ENCODE measurements at regions of chr5 and their contacts with region 1.

Region 1: DNA sequence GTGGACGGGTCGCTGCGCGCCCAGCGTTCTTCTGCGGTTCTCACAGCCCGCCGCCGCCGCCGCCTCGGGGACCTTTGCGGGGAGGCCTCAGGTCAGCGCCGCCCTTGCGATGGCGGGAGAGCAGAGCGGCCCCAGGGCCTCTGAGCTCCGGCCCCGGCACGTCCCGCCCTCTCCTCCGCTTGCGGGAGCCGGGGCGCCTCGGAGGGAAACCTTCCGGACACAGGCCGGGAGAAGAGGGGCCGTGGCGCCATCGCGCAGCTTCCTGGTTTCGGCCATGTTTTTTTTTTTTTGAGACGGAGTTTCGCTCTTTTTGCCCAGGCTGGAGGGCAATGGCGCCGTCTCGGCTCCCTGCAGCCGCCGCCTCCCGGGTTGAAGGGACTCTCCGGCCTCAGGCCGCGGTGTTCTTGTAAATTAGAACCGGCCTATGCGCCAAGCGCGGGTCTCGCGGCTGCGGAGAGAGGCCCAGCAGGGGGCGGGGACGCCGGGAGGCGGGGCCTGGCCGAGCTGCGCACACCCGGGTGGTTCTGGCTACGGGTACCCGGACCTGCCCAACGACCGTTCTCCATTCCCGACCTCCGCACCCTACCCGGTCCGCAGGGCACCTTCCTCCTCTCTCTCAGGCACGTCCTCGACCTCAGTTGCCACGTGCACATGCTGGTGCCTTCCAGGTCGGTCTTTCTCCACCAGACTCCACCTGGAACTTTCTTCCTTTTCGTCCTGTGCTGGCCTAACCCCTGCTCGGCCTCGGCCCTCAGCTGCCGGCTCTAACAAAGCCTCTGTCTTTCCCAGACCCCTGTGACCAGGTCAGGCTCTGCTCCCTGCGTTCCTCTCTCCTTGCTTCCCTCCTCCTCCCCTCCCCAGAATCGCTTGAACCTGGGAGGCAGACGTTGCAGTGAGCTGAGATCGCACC is 28.8 kb upstream of the MGAT1 start:
- DNase-seq: peak; percentile 60 to 85 (median 70)
- ATAC-seq: peak; percentile 76
- H3K4me3 ChIP-seq: peak overlapping the region; percentile 62
- H3K4me3 Mint-ChIP-seq: peak overlapping the region; percentile 97 to 100 (median 98)
- H3K27ac ChIP-seq: peak overlapping the region; percentile 95
- H3K27ac Mint-ChIP-seq: peak overlapping the region; percentile 96 to 100 (median 98)
- H3K4me1 ChIP-seq: peaks cover 29 to 32% of the 10 kb centered on the region in 2 donors
- H3K4me1 Mint-ChIP-seq: peaks cover 35 to 67% (median 58%) of the 10 kb centered on the region in 7 donors
- H3K27me3 ChIP-seq: no peaks in the 10 kb centered on the region
- H3K27me3 Mint-ChIP-seq: no peaks in the 10 kb centered on the region

Region 2: DNA sequence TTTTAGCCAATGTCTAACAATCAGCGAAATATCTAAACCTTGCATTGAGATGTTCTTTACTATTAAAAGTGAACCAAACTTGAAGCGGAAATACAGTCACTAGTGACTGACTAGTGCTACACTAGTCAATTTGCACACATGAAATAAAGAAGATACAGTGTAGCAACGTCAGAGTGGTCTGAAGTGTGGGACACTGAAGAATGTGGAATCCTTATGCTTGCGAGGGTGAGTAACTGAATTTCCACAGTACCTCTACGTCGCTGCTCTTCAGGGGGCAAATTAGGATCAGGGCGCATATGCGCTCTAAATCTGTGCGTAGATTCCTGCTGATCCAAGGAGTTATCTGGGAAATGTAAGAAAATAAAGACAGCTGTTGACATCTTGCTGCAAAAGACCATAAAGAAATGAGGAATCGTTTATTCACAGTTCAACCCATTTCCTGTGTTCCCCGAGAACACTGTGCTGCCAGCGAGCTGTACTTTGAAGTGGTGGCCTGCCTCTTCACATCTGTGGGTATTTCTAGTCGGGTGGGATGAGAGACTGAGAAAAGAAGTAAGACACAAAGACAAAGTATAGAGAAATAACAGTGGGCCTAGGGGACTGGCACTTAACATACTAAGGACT is 142.2 kb before region 1 on chr5:
- CTCF ChIA-PET with region 1: no interaction called
- POLR2A ChIA-PET with region 1: interaction called, 6 read pairs
- intact Hi-C with region 1: loop called in 1 of 2 experiments (anchors 10 kb)
- DNase-seq: peak in 8 of 9 donors; percentile 27 to 80 (median 74)
- ATAC-seq: peak; percentile 88
- H3K4me3 ChIP-seq: peak overlapping the region; percentile 35
- H3K4me3 Mint-ChIP-seq: peak overlapping the region; percentile 52 to 87 (median 79)
- H3K27ac ChIP-seq: peak overlapping the region; percentile 75
- H3K27ac Mint-ChIP-seq: peak overlapping the region; percentile 51 to 98 (median 97)
- H3K4me1 ChIP-seq: peaks cover 29 to 75% of the 10 kb centered on the region in 2 donors
- H3K4me1 Mint-ChIP-seq: peaks cover 22 to 85% (median 80%) of the 10 kb centered on the region in 7 donors
- H3K27me3 ChIP-seq: no peaks in the 10 kb centered on the region
- H3K27me3 Mint-ChIP-seq: peaks cover 0 to 10% (median 0%) of the 10 kb centered on the region in 5 donors

Region 3: DNA sequence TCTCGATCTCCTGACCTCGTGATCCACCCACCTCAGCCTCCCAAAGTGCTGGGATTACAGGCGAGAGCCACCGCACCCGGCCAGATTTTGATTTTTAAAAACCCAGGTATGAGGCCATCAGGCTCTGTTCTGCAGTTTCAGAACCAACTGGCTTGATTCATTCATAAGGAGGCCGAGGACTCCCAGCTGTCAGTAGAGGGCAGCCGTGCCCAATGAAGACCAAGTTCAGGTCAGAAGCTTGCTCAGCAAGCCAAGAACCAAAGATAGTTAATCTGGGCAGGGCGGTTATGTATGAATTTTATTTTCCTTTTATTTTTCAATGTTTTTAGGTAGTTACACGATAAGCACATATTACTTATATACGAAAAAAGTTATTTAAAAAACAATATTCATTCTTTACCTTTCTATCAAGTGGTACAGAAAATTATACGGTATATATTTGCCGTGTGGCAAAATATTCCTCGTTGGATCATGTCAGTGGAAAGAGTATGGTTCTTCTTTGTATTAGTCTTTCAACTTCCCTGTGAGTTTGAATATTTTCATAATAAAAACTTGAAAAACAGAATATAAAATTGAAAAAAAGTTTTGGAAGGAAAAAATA is 46.8 kb before region 1 on chr5:
- CTCF ChIA-PET with region 1: interaction called, 3 read pairs
- POLR2A ChIA-PET with region 1: interaction called, 8 read pairs
- intact Hi-C with region 1: loop called in 1 of 2 experiments (anchors 1 kb)
- DNase-seq: peak; percentile 45 to 78 (median 65)
- ATAC-seq: peak; percentile 87
- H3K4me3 ChIP-seq: no peak overlapping the region
- H3K4me3 Mint-ChIP-seq: no peak overlapping the region
- H3K27ac ChIP-seq: no peak overlapping the region
- H3K27ac Mint-ChIP-seq: peak overlapping the region in 6 of 9 donors; percentile 8 to 76 (median 33)
- H3K4me1 ChIP-seq: peaks cover 0 to 7% of the 10 kb centered on the region in 2 donors
- H3K4me1 Mint-ChIP-seq: peaks cover 23 to 58% (median 46%) of the 10 kb centered on the region in 7 donors
- H3K27me3 ChIP-seq: no peaks in the 10 kb centered on the region
- H3K27me3 Mint-ChIP-seq: no peaks in the 10 kb centered on the region

Region 4: GRCh38 chr5:180795771-180796313 is 35.6 kb before region 1 on chr5:
- CTCF ChIA-PET with region 1: interaction called, 3 read pairs
- POLR2A ChIA-PET with region 1: interaction called, 273 read pairs
- intact Hi-C with region 1: no loop called
- DNase-seq: no peak
- ATAC-seq: no peak
- H3K4me3 ChIP-seq: no peak overlapping the region
- H3K4me3 Mint-ChIP-seq: peak overlapping the region; percentile 12 to 91 (median 56)
- H3K27ac ChIP-seq: peak overlapping the region; percentile 24
- H3K27ac Mint-ChIP-seq: peak overlapping the region; percentile 38 to 91 (median 82)
- H3K4me1 ChIP-seq: peaks cover 59 to 61% of the 10 kb centered on the region in 2 donors
- H3K4me1 Mint-ChIP-seq: peaks cover 66 to 87% (median 81%) of the 10 kb centered on the region in 7 donors
- H3K27me3 ChIP-seq: no peaks in the 10 kb centered on the region
- H3K27me3 Mint-ChIP-seq: no peaks in the 10 kb centered on the region

Region 5: GRCh38 chr5:180816608-180817534 is 14.5 kb before region 1 on chr5:
- CTCF ChIA-PET with region 1: interaction called, 9 read pairs
- POLR2A ChIA-PET with region 1: interaction called, 167 read pairs
- intact Hi-C with region 1: no loop called
- DNase-seq: peak in 2 of 9 donors; percentile 31 to 40
- ATAC-seq: no peak
- H3K4me3 ChIP-seq: peak overlapping the region; percentile 37
- H3K4me3 Mint-ChIP-seq: peak overlapping the region; percentile 39 to 90 (median 76)
- H3K27ac ChIP-seq: peak overlapping the region; percentile 20
- H3K27ac Mint-ChIP-seq: peak overlapping the region in 8 of 9 donors; percentile 60 to 94 (median 89)
- H3K4me1 ChIP-seq: peaks cover 9 to 18% of the 10 kb centered on the region in 2 donors
- H3K4me1 Mint-ChIP-seq: peaks cover 27 to 63% (median 55%) of the 10 kb centered on the region in 7 donors
- H3K27me3 ChIP-seq: no peaks in the 10 kb centered on the region
- H3K27me3 Mint-ChIP-seq: peaks cover 0 to 15% (median 0%) of the 10 kb centered on the region in 5 donors

Region 6: DNA sequence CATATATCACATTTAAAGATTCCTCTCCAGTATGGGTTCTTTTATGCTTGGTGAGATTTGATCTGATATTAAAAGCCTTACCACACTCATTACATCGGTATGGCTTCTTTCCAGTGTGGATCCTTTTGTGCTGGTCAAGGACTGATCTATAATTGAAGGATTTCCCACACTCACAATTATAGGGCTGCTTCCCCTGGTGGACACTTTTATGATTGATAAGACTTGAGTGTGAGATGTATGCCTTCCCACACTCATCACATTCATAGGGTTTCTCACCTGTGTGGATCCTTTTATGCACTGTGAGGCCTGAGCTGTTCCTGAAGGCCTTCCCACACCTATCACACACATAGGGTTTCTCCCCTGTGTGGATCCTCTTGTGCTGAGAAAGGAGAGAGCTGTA is 17.5 kb after region 1 on chr5:
- CTCF ChIA-PET with region 1: no interaction called
- POLR2A ChIA-PET with region 1: interaction called, 12 read pairs
- intact Hi-C with region 1: no loop called
- DNase-seq: no peak
- ATAC-seq: no peak
- H3K4me3 ChIP-seq: no peak overlapping the region
- H3K4me3 Mint-ChIP-seq: no peak overlapping the region
- H3K27ac ChIP-seq: no peak overlapping the region
- H3K27ac Mint-ChIP-seq: no peak overlapping the region
- H3K4me1 ChIP-seq: no peaks in the 10 kb centered on the region
- H3K4me1 Mint-ChIP-seq: peaks cover 0 to 22% (median 19%) of the 10 kb centered on the region in 7 donors
- H3K27me3 ChIP-seq: no peaks in the 10 kb centered on the region
- H3K27me3 Mint-ChIP-seq: no peaks in the 10 kb centered on the region

Region 7: DNA sequence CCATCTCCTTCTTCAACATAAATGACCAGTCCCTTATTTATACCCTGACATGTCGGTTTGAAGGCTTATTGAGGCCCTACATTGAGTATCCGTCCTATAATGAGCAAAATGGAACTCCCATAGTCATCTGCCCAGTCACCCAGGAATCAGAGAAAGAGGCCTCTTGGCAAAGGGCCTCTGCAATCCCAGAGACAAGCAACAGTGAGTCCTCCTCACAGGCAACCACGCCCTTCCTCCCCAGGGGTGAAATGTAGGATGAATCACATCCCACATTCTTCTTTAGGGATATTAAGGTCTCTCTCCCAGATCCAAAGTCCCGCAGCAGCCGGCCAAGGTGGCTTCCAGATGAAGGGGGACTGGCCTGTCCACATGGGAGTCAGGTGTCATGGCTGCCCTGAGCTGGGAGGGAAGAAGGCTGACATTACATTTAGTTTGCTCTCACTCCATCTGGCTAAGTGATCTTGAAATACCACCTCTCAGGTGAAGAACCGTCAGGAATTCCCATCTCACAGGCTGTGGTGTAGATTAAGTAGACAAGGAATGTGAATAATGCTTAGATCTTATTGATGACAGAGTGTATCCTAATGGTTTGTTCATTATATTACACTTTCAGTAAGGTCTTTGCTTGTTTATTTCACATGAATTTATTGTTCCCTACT is 119.0 kb after region 1 on chr5:
- CTCF ChIA-PET with region 1: no interaction called
- POLR2A ChIA-PET with region 1: no interaction called
- intact Hi-C with region 1: no loop called
- DNase-seq: no peak
- ATAC-seq: no peak
- H3K4me3 ChIP-seq: no peak overlapping the region
- H3K4me3 Mint-ChIP-seq: no peak overlapping the region
- H3K27ac ChIP-seq: no peak overlapping the region
- H3K27ac Mint-ChIP-seq: no peak overlapping the region
- H3K4me1 ChIP-seq: no peaks in the 10 kb centered on the region
- H3K4me1 Mint-ChIP-seq: peaks cover 0 to 4% (median 0%) of the 10 kb centered on the region in 7 donors
- H3K27me3 ChIP-seq: no peaks in the 10 kb centered on the region
- H3K27me3 Mint-ChIP-seq: peaks cover 0 to 6% (median 3%) of the 10 kb centered on the region in 5 donors